CD8-positive, alpha-beta T cell (primary cell): ENCODE measurements at regions of chr1 and their contacts with region 1.

Region 1: DNA sequence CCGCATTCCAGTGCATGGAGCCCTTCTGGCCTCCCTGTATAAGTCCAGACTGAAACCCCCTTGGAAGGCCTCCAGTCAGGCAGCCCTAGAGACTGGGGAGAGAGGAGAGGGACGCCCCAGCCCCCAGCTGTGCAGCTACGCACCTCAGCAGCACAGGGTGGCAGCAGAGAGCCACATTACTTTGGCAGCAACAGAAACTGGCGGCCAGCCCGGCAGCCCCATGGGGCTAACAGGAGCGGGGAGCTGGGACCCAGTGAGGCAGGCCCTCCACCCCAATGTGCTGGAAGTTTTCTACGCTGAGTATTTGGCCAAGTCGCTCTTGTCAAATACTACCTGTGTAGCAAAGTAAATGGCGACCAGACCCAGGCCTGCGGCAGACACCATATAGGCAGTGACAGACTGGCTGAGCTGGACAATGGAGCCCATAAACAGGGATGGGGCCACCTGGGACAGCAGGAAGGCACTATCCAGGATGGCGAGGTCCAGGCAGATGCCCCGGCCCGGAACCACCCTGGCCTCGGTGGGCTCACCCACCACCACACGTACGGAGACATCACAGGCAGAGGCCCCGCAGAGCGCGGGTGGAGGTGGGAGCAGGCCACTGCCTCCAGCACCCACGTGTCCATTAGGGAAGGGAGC is 21.2 kb downstream of the SLC45A3 start:
- DNase-seq: peak; percentile 57 to 82 (median 75)
- ATAC-seq: peak; percentile 88
- H3K4me3 ChIP-seq: no peak overlapping the region
- H3K4me3 Mint-ChIP-seq: no peak overlapping the region
- H3K27ac ChIP-seq: no peak overlapping the region
- H3K27ac Mint-ChIP-seq: no peak overlapping the region
- H3K4me1 ChIP-seq: no peaks in the 10 kb centered on the region
- H3K4me1 Mint-ChIP-seq: no peaks in the 10 kb centered on the region
- H3K27me3 ChIP-seq: no peaks in the 10 kb centered on the region
- H3K27me3 Mint-ChIP-seq: no peaks in the 10 kb centered on the region
- CTCF ChIP-seq: peak; percentile 82

Region 2: GRCh38 chr1:205284343-205285144 is 374.5 kb before region 1 on chr1:
- CTCF ChIA-PET with region 1: no interaction called
- POLR2A ChIA-PET with region 1: no interaction called
- intact Hi-C with region 1: no loop called
- DNase-seq: peak; percentile 78 to 96 (median 93)
- ATAC-seq: peak; percentile 62
- H3K4me3 ChIP-seq: peak overlapping the region; percentile 34 to 40
- H3K4me3 Mint-ChIP-seq: peak overlapping the region; percentile 83
- H3K27ac ChIP-seq: peak overlapping the region; percentile 56 to 71
- H3K27ac Mint-ChIP-seq: peak overlapping the region; percentile 96
- H3K4me1 ChIP-seq: peaks cover 81% of the 10 kb centered on the region
- H3K4me1 Mint-ChIP-seq: peaks cover 85% of the 10 kb centered on the region
- H3K27me3 ChIP-seq: no peaks in the 10 kb centered on the region
- H3K27me3 Mint-ChIP-seq: no peaks in the 10 kb centered on the region
- CTCF ChIP-seq: no peak

Region 3: DNA sequence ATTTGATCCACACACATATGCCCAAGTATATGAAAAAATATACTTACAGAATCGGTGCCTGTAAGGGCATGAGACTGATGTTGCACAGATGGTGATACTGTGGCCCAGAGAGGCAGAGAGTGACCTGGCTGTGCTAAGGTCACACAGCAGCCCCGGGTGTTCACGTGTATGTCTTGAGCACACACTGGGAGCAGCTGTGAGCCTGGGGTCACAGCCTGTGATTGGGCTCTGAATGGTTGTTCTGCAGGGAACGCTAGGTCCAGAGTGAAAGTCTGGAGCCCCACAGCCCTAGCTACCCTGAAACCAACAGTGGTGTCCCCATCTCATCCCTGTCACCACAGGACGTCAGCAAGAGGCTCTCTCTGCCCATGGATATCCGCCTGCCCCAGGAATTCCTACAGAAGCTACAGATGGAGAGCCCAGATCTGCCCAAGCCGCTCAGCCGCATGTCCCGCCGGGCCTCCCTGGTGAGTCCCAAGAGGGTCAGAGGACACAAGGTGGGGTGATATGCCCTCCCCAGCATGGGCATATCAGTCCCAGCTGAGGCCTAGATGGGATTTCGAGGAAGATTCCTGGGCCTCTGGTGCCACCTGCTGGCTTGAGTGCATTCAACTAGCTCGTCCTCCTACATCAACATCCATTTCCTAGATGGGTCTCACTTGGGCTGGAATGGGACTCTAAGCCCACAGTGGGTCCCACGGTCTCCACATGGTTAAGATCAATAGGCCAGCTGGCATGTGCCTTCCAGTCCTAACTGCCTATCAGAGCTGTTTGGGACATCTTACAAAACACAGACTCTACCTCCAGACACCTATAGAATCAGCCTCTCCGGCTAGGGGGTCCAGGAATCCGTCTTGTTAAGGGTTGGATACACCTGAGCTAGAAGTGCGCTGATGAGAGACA is 134.9 kb before region 1 on chr1:
- CTCF ChIA-PET with region 1: interaction called, 254 read pairs
- POLR2A ChIA-PET with region 1: no interaction called
- intact Hi-C with region 1: loop called in 1 of 2 experiments (anchors 1 kb)
- DNase-seq: peak; percentile 47 to 82 (median 76)
- ATAC-seq: peak; percentile 70
- H3K4me3 ChIP-seq: no peak overlapping the region
- H3K4me3 Mint-ChIP-seq: no peak overlapping the region
- H3K27ac ChIP-seq: no peak overlapping the region
- H3K27ac Mint-ChIP-seq: no peak overlapping the region
- H3K4me1 ChIP-seq: no peaks in the 10 kb centered on the region
- H3K4me1 Mint-ChIP-seq: peaks cover under 1% of the 10 kb centered on the region
- H3K27me3 ChIP-seq: no peaks in the 10 kb centered on the region
- H3K27me3 Mint-ChIP-seq: no peaks in the 10 kb centered on the region
- CTCF ChIP-seq: peak; percentile 64

Region 4: DNA sequence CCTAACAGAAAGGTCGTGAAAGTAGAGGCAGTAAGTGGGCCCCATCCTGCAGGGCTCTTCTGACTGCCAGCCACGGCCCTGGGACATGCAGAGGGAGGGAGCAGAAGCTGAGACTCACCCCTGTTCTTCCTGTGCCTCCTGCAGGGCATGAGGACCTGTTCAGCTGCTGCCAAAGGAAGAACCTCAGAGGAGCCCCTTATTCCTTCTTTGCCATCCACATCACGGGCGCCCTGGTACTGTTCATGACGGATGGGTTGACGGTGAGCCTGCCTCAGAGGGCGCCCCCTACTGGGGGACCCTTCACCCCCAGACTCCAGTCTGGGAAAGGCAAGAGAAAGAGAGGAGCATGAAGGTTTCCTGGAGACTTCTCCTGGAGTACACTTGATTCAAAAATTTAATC is 74.3 kb before region 1 on chr1:
- CTCF ChIA-PET with region 1: interaction called, 401 read pairs
- POLR2A ChIA-PET with region 1: no interaction called
- intact Hi-C with region 1: no loop called
- DNase-seq: no peak
- ATAC-seq: no peak
- H3K4me3 ChIP-seq: no peak overlapping the region
- H3K4me3 Mint-ChIP-seq: no peak overlapping the region
- H3K27ac ChIP-seq: no peak overlapping the region
- H3K27ac Mint-ChIP-seq: no peak overlapping the region
- H3K4me1 ChIP-seq: peaks cover 20% of the 10 kb centered on the region
- H3K4me1 Mint-ChIP-seq: peaks cover 18% of the 10 kb centered on the region
- H3K27me3 ChIP-seq: no peaks in the 10 kb centered on the region
- H3K27me3 Mint-ChIP-seq: no peaks in the 10 kb centered on the region
- CTCF ChIP-seq: no peak

Region 5: DNA sequence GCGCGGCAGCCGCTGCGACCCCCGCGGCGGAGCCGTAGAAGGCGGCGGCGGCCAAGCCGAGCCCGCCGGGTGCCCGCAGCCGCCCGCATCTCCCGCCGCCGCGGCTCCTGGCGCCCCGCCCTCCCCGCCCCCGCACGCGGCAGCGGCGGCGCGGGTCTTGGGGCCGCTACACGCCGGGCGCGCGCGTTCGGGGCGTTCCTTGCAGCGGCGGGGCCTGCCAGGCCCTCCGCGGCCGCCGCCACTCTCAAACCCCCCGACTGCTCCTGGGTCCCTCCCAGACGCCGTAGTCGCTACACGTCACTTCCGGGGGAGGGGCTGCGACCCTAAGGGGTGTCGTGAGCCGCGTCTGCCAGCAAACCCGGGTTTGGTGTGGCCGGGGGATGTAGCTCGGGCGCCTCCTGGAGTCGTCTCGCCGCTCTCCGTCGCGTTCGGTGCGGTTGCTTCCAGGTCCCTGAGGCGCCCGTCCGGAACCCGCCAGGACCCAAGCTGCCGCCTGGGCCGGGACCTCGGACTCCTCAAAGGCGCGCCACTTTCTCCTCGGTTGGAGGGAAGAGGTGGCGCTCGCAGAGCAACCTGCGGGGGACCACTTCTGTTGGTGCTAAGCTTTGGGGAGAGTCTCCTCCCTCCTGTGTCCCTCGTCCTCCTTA is 27.2 kb before region 1 on chr1 and contains the start of gene ELK4:
- CTCF ChIA-PET with region 1: interaction called, 61 read pairs
- POLR2A ChIA-PET with region 1: interaction called, 10 read pairs
- intact Hi-C with region 1: loop called (anchors 1 kb)
- DNase-seq: peak; percentile 99 to 100 (median 100)
- ATAC-seq: peak; percentile 78
- H3K4me3 ChIP-seq: peak within 1 kb of the TSS; percentile 64 to 71
- H3K4me3 Mint-ChIP-seq: peak within 1 kb of the TSS; percentile 89
- H3K27ac ChIP-seq: peak within 1 kb of the TSS; percentile 75 to 95
- H3K27ac Mint-ChIP-seq: peak within 1 kb of the TSS; percentile 99
- H3K4me1 ChIP-seq: peaks cover 37% of the 10 kb centered on the region
- H3K4me1 Mint-ChIP-seq: peaks cover 44% of the 10 kb centered on the region
- H3K27me3 ChIP-seq: no peaks in the 10 kb centered on the region
- H3K27me3 Mint-ChIP-seq: no peaks in the 10 kb centered on the region
- CTCF ChIP-seq: peak; percentile 78
- total RNA-seq, gene ELK4: 142 to 147 TPM

Region 6: DNA sequence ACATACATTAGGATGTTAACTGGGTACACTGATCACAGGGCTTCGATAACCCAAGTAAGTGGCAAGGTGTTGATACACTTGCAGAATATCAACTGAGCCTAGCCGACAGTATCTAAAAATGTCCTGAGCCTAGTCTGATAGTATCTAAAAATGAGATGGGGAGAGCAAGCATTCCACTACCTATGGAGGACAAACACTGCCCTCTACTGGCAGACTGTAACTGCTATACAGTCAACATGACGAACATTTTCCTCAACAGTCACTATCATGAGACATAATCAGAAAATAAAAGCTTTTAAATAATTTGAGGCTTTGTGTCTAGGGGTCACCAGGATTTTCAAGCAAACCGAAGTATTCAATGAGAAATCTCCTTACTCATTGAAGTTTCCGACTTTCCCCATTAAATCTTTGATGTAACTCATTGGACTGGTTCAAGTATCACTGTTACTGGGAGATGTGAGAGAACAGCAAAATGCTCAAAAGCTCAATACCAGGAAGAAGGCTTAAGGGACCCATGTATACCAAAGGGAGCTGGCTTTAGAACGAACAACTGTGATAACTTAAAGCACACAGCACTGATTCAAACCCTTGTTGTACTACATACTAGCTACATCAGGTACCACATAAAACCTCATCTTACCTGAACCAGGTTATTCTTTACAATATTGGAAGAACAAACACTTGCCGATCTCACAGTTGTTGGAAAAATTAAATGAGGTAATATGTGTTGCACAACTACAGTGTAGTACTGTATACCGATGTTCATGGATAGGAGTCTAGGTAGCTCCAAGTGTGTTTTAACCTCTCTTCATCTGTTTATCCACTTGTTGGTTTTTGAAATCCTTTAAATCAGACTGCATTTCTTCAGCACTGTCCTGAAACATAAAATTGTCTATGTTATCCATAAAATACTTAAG is 52.3 kb after region 1 on chr1:
- CTCF ChIA-PET with region 1: interaction called, 125 read pairs
- POLR2A ChIA-PET with region 1: no interaction called
- intact Hi-C with region 1: loop called (anchors 1 kb)
- DNase-seq: peak in 8 of 9 experiments; percentile 34 to 86 (median 66)
- ATAC-seq: peak; percentile 95
- H3K4me3 ChIP-seq: no peak overlapping the region
- H3K4me3 Mint-ChIP-seq: no peak overlapping the region
- H3K27ac ChIP-seq: no peak overlapping the region
- H3K27ac Mint-ChIP-seq: no peak overlapping the region
- H3K4me1 ChIP-seq: no peaks in the 10 kb centered on the region
- H3K4me1 Mint-ChIP-seq: peaks cover 13% of the 10 kb centered on the region
- H3K27me3 ChIP-seq: no peaks in the 10 kb centered on the region
- H3K27me3 Mint-ChIP-seq: no peaks in the 10 kb centered on the region
- CTCF ChIP-seq: peak; percentile 90

Region 7: GRCh38 chr1:205977402-205978014 is 318.4 kb after region 1 on chr1:
- CTCF ChIA-PET with region 1: interaction called, 89 read pairs
- POLR2A ChIA-PET with region 1: no interaction called
- intact Hi-C with region 1: loop called in 1 of 2 experiments (anchors 1 kb)
- DNase-seq: peak; percentile 47 to 85 (median 78)
- ATAC-seq: peak; percentile 68
- H3K4me3 ChIP-seq: no peak overlapping the region
- H3K4me3 Mint-ChIP-seq: no peak overlapping the region
- H3K27ac ChIP-seq: no peak overlapping the region
- H3K27ac Mint-ChIP-seq: no peak overlapping the region
- H3K4me1 ChIP-seq: no peaks in the 10 kb centered on the region
- H3K4me1 Mint-ChIP-seq: no peaks in the 10 kb centered on the region
- H3K27me3 ChIP-seq: peaks cover 0 to 6% of the 10 kb centered on the region in 2 experiments
- H3K27me3 Mint-ChIP-seq: no peaks in the 10 kb centered on the region
- CTCF ChIP-seq: peak; percentile 87